ENCODE measurements at regions of chr10 and their contacts with region 1.

Region 1: DNA sequence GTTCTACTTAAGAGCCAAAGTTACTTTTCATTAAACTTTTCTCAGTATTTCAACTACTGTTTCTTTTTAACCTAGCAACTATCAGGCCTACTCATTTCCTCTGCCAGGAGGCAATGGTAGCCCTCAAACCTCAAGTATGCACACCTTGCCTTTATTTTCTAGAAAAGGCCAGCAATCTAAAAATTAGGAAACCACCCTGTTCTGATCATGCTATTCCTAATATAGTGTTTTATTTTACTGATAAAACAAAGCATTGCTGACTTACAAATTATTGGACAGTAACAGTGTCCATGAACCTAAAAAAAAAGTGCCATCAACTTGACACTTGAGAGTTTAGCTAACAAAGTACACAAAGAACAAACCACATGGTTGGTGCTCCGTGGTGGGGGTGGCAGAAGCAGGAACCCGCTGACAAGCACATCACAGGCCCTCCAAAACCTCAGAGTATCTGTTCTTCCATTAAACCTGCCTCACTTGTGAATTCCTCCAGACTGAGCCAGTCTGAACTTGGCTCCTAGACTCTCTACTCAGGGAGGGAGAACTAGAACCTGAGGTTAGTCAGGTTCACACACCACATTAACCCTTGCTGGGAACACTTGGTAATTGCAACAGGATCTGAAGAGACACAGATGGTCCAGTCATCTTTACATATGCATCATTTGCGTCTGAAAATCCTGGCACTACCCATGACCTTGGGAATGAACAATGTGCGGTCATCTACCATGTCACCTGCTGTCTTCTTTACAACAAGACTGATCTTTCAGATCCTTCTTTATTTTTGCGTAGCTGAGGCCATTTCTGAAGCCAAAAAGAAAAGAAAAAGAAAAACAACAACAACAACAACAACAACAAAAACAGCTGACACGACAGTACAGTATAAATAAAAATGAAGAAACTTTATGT is 31.9 kb downstream of the PIP4K2A start:
- DNase-seq: peak; percentile 74
- H3K4me3 Mint-ChIP-seq: peak overlapping the region; percentile 66
- H3K27ac Mint-ChIP-seq: peak overlapping the region; percentile 99
- H3K4me1 Mint-ChIP-seq: peaks cover 87% of the 10 kb centered on the region
- H3K27me3 Mint-ChIP-seq: no peaks in the 10 kb centered on the region

Region 2: GRCh38 chr10:22316285-22317120 is 366.0 kb before region 1 on chr10 and contains the start of gene COMMD3:
- CTCF ChIA-PET with region 1: no interaction called
- POLR2A ChIA-PET with region 1: no interaction called
- intact Hi-C with region 1: loop called (anchors 5 kb)
- DNase-seq: peak; percentile 87
- H3K4me3 Mint-ChIP-seq: peak within 1 kb of the TSS; percentile 92
- H3K27ac Mint-ChIP-seq: peak within 1 kb of the TSS; percentile 92
- H3K4me1 Mint-ChIP-seq: peaks cover 37% of the 10 kb centered on the region
- H3K27me3 Mint-ChIP-seq: peaks cover 4% of the 10 kb centered on the region
- total RNA-seq, gene COMMD3: 84.6 to 91.4 TPM

Region 3: DNA sequence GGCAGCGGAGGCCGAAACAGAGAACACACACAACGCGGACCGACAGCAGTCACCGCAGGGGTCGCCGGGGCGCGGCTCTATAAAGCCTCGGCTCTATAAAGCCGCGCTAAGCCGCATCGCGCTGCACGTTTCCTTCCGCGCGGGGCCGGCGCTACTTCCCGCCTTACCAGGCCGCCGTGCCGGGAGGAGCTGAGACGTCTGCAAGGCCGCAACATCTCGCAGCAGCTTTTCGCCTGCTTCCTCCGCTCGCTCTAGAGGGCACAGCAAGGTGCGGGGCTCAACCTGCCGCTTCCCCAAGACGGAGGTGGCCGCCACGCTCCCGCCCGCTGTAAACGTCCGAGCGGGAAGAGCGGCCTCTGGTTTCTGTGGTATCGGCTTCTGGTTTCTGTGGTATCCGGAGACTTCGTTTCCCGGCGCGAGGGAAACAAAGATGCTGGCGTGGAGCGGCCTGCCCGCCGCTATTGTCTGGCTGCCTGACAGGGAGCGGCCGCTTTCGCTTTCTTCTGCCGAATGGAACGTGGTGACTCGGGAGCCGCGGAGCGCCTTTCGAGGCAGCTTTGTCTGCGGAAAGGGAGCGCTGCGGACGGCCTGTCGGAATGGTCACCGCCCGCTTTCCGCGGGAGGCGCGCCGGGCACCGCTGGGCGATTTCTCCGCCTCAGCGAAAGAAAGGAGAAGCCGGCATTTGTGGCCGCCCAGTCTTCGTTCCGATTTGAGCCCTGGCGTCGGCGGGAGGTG is 245.4 kb before region 1 on chr10:
- CTCF ChIA-PET with region 1: no interaction called
- POLR2A ChIA-PET with region 1: no interaction called
- intact Hi-C with region 1: loop called (anchors 10 kb)
- DNase-seq: peak; percentile 89
- H3K4me3 Mint-ChIP-seq: peak overlapping the region; percentile 88
- H3K27ac Mint-ChIP-seq: peak overlapping the region; percentile 91
- H3K4me1 Mint-ChIP-seq: peaks cover 50% of the 10 kb centered on the region
- H3K27me3 Mint-ChIP-seq: no peaks in the 10 kb centered on the region

Region 4: DNA sequence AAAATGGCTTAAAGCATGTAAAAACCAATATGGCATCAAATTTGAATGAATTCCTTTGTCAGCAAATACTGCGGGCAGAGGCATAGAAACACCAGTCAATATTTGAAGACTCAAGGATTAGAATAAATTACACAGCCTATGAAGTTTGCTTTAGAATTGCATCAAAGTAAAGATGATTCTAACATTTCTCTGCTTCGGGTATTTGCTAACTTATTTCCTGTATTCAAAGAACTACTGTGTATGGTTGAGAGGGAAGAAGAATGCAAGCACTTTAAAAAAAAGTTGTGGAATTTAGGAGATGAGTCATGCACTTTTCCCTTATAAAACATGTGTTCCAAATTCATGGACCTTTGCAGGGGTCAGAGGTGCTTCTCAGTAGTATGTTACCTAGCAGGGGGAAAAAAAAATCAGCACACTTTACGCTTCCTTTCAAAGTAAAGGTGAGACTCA is 58.2 kb before region 1 on chr10:
- CTCF ChIA-PET with region 1: no interaction called
- POLR2A ChIA-PET with region 1: interaction called, 21 read pairs
- intact Hi-C with region 1: no loop called
- DNase-seq: no peak
- H3K4me3 Mint-ChIP-seq: peak overlapping the region; percentile 52
- H3K27ac Mint-ChIP-seq: peak overlapping the region; percentile 92
- H3K4me1 Mint-ChIP-seq: peaks cover 92% of the 10 kb centered on the region
- H3K27me3 Mint-ChIP-seq: no peaks in the 10 kb centered on the region

Region 5: DNA sequence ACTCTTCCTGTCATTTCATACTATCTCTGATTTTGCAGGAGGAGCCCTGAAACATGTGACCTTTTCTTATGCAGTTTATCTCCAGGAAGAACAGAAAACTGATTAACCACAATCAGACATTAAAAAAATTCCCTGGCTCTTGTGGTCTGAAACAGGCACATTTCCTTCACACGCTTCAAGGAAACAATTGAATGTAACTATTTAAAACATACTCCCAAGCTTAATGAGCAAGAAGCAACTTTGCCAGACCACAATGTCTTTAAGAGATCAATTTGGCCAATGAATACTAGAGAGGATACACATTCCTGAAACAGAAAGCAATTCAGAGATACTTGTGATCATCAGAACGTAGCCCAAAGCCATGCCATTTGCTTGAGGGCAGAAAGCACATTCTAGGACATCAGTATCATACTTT is 33.9 kb before region 1 on chr10:
- CTCF ChIA-PET with region 1: interaction called, 5 read pairs
- POLR2A ChIA-PET with region 1: interaction called, 29 read pairs
- intact Hi-C with region 1: loop called (anchors 1 kb)
- DNase-seq: no peak
- H3K4me3 Mint-ChIP-seq: peak overlapping the region; percentile 74
- H3K27ac Mint-ChIP-seq: peak overlapping the region; percentile 95
- H3K4me1 Mint-ChIP-seq: peaks cover 93% of the 10 kb centered on the region
- H3K27me3 Mint-ChIP-seq: no peaks in the 10 kb centered on the region

Region 6: GRCh38 chr10:22666287-22667092 is 16.0 kb before region 1 on chr10:
- CTCF ChIA-PET with region 1: interaction called, 8 read pairs
- POLR2A ChIA-PET with region 1: interaction called, 15 read pairs
- intact Hi-C with region 1: loop called (anchors 1 kb)
- DNase-seq: peak; percentile 71
- H3K4me3 Mint-ChIP-seq: peak overlapping the region; percentile 72
- H3K27ac Mint-ChIP-seq: peak overlapping the region; percentile 84
- H3K4me1 Mint-ChIP-seq: peaks cover 75% of the 10 kb centered on the region
- H3K27me3 Mint-ChIP-seq: no peaks in the 10 kb centered on the region

Region 7: GRCh38 chr10:22714479-22715289 is 32.2 kb after region 1 on chr10 and contains the start of gene PIP4K2A:
- CTCF ChIA-PET with region 1: interaction called, 7 read pairs
- POLR2A ChIA-PET with region 1: interaction called, 39 read pairs
- intact Hi-C with region 1: loop called (anchors 1 kb)
- DNase-seq: peak; percentile 82
- H3K4me3 Mint-ChIP-seq: peak within 1 kb of the TSS; percentile 89
- H3K27ac Mint-ChIP-seq: peak within 1 kb of the TSS; percentile 91
- H3K4me1 Mint-ChIP-seq: peaks cover 28% of the 10 kb centered on the region
- H3K27me3 Mint-ChIP-seq: no peaks in the 10 kb centered on the region
- total RNA-seq, gene PIP4K2A: 107 to 108 TPM